ENCODE measurements at regions of chr13 and their contacts with region 1.

Region 1: DNA sequence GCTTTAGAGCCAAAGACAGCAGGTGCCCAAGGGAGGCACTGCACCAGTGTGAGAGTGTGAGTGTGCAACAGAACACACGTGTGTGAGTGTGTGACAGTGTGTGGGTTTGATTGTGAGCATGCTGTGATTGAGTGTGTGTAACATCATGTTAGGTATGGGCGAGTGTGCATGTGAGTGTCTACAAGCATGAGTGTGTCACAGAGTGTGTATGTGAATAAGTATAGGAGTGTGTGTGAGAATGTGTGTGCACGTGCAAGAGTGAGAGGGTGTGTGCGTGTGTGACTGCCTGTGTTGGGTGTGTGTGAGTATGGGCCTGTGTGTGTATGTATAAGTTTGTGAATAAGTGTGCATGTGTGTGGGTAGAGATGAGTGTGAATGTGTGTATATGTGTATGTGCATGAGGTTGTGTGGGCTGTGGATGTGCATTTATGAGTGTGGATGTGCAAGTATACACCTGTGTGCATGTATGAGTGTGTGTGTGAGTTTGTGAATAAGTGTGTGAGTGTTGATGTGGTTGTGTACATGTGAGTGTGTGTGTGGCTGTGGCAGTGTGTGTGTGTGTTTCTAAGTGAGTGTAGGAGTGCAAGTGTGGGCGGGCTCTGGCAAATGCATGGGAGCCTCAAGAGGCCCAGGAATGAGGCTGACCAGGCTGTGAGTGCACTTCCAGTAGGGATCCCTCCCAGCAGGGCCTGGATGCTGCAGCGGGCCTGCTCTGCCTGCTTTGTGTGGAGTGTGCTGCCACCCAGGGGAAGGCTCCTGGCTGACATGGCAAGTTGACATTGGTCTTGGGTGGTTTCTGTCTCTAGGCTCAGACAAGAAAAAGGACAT is 198.4 kb downstream of the COL4A1 start:
- DNase-seq: peak; percentile 74
- H3K4me3 ChIP-seq: no peak overlapping the region
- H3K27ac ChIP-seq: peak overlapping the region; percentile 30 to 51
- H3K4me1 ChIP-seq: no peaks in the 10 kb centered on the region
- H3K27me3 ChIP-seq: no peaks in the 10 kb centered on the region
- CTCF ChIP-seq: peak in 3 of 4 experiments; percentile 54 to 85 (median 82)
- POLR2A ChIP-seq: no peak

Region 2: GRCh38 chr13:108961542-108962125 is 1146.9 kb before region 1 on chr13:
- intact Hi-C with region 1: loop called (anchors 5 kb)
- DNase-seq: no peak
- H3K4me3 ChIP-seq: no peak overlapping the region
- H3K27ac ChIP-seq: no peak overlapping the region
- H3K4me1 ChIP-seq: no peaks in the 10 kb centered on the region
- H3K27me3 ChIP-seq: no peaks in the 10 kb centered on the region
- CTCF ChIP-seq: peak; percentile 62 to 93 (median 79)
- POLR2A ChIP-seq: no peak

Region 3: GRCh38 chr13:109145631-109146030 is 962.9 kb before region 1 on chr13:
- intact Hi-C with region 1: loop called (anchors 5 kb)
- DNase-seq: no peak
- H3K4me3 ChIP-seq: no peak overlapping the region
- H3K27ac ChIP-seq: no peak overlapping the region
- H3K4me1 ChIP-seq: no peaks in the 10 kb centered on the region
- H3K27me3 ChIP-seq: no peaks in the 10 kb centered on the region
- CTCF ChIP-seq: peak; percentile 36 to 79 (median 66)
- POLR2A ChIP-seq: no peak

Region 4: DNA sequence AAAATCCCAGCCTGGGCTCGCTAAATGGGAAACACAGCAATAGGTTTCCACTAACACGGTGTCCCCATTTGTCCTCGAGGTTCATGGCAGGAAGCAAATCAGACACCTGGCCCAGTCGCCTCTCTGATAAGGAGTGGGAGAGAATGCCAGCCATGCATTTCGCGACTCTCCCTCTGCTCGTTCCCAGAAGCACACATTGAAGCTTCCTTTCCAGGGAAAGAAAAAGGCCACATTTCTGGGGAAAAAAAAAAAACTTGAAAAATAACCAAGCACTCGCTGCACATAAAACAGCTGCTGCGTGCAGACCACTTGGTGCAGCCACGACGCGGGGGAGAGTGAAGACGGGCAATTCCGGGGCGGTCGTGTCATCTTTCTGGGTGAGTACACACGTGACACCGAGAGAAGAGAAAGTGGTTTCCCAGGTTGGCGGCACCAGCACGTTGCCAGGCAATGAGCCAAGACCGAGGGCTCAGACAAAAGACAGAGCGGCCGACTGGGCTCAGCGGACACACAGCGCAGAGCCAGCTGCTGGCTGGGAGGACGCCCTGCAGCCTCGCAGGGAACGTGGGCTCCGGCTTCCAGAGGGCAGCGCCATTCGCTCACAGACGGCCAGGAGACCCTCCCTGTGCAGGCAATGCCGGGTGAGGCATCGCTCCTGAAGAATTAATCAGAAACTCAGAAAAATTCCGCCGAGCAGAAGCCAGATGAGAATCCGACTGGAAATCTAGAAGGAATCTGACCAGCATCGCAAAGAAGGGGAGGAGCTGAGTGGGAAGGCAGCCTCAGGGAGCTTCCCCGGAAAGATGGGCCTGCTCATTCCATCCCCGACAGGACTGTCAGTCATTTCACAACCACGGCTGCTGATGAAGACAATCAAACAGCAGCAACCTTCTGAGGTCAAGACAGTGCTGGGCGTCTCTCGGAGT is 239.0 kb before region 1 on chr13:
- intact Hi-C with region 1: loop called (anchors 5 kb)
- DNase-seq: peak; percentile 36
- H3K4me3 ChIP-seq: peak overlapping the region; percentile 8 to 28
- H3K27ac ChIP-seq: peak overlapping the region in 1 of 2 donors; percentile 60
- H3K4me1 ChIP-seq: no peaks in the 10 kb centered on the region
- H3K27me3 ChIP-seq: no peaks in the 10 kb centered on the region
- CTCF ChIP-seq: peak in 1 of 4 experiments; percentile 39
- POLR2A ChIP-seq: no peak

Region 5: DNA sequence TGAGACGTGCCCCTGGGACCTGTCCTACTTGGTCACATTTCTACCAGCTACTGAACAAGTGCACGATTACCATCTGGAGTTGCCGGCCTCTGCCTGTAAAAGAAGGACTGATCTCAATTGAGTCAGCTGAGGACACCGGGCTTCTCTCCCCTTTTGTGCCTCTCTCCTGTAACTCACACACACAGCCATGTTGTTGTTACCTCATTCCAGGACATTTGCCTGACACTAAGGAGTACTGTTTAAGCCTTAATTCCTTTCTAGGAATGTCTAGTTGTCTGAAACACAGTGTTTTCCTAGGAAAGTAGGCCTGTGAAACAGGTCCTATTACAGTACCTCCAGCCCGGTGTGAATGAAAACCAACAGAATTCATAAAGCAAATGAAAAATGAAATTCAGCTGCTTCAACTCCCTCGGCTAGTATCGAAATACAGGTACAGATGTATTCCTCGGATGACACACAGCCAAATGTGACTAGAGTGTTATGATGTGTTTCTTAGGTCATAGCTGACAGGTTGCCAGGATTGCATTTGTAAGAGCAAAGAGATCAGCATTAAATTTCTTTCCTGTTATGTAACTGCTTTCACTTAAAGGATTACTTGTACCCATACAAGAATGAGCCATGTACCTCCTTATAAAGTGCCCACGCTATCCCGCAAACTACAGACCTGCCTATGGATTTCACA is 170.2 kb before region 1 on chr13:
- intact Hi-C with region 1: loop called (anchors 10 kb)
- DNase-seq: no peak
- H3K4me3 ChIP-seq: no peak overlapping the region
- H3K27ac ChIP-seq: no peak overlapping the region
- H3K4me1 ChIP-seq: no peaks in the 10 kb centered on the region
- H3K27me3 ChIP-seq: no peaks in the 10 kb centered on the region
- CTCF ChIP-seq: no peak
- POLR2A ChIP-seq: no peak